ENCODE measurements at regions of chr1 and their contacts with region 1.

Region 1: DNA sequence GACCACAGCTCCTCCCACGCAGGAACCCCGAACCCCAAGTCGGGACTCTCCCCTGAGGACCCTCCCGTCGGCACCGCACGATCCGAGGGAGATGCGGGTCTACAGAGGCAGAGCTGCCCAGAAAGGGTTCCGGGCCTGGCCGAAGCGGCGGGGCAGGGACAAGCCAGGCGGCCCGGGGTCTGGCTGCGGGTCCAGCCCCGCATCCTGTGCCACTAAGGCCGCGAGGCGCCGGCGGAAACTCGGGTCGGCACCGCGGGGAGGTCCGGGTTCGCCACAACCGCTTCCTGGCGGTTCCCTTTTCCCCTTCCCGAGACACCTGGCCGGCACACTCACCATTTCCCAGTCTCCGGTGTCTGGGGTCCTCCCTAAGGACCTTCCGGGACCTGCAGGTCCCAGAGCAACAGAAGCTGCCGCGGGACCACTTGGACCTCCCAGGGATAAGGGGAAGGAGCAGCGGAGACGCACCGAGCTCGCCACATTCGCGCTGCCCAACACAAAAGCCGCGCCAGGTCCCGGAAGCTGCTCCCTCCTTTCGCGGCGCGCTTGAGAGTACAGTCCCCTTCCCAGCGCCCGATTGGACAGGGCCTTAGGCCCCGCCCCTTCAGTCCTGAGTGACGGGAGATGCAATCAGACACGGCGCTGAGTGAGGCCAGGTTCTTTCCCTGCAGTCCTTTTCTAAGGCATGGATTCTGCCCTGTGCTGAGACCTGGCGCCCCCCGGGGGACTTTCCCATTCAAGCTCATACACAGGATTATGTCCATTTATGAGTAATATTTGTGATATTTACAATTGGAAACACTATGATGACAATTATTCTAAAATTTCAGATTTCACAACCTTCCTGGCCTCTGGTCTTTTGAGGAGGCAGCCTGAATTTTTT is at the start of gene ZNF670:
- DNase-seq: peak; percentile 73 to 90
- ATAC-seq: peak; percentile 94 to 97 (median 97)
- H3K4me3 ChIP-seq: peak within 1 kb of the TSS; percentile 82
- H3K4me3 Mint-ChIP-seq: peak within 1 kb of the TSS; percentile 91
- H3K27ac ChIP-seq: peak within 1 kb of the TSS; percentile 22
- H3K27ac Mint-ChIP-seq: peak within 1 kb of the TSS; percentile 68 to 80
- H3K4me1 ChIP-seq: peaks cover 19% of the 10 kb centered on the region
- H3K4me1 Mint-ChIP-seq: peaks cover 33 to 38% of the 10 kb centered on the region in 2 donors
- H3K27me3 ChIP-seq: no peaks in the 10 kb centered on the region
- H3K27me3 Mint-ChIP-seq: peaks cover 4 to 8% of the 10 kb centered on the region in 2 donors
- CTCF ChIP-seq: peak; percentile 40
- total RNA-seq, gene ZNF670: 0.35 to 0.95 (median 0.45) TPM

Region 2: GRCh38 chr1:246931549-246932365 is 146.7 kb before region 1 on chr1 and contains the start of gene AHCTF1:
- intact Hi-C with region 1: loop called (anchors 5 kb)
- DNase-seq: peak; percentile 85 to 98
- ATAC-seq: peak; percentile 85 to 96 (median 88)
- H3K4me3 ChIP-seq: peak within 1 kb of the TSS; percentile 85
- H3K4me3 Mint-ChIP-seq: peak within 1 kb of the TSS; percentile 96
- H3K27ac ChIP-seq: peak within 1 kb of the TSS; percentile 88
- H3K27ac Mint-ChIP-seq: peak within 1 kb of the TSS; percentile 91 to 94
- H3K4me1 ChIP-seq: peaks cover 15% of the 10 kb centered on the region
- H3K4me1 Mint-ChIP-seq: peaks cover 33 to 35% of the 10 kb centered on the region in 2 donors
- H3K27me3 ChIP-seq: no peaks in the 10 kb centered on the region
- H3K27me3 Mint-ChIP-seq: no peaks in the 10 kb centered on the region
- CTCF ChIP-seq: no peak
- total RNA-seq, gene AHCTF1: 46.5 to 50.2 (median 47.4) TPM

Region 3: GRCh38 chr1:247103859-247104591 is 25.5 kb after region 1 on chr1 and contains the start of gene ZNF669:
- intact Hi-C with region 1: loop called (anchors 2 kb)
- DNase-seq: peak; percentile 91 to 93
- ATAC-seq: peak; percentile 98 to 100 (median 99)
- H3K4me3 ChIP-seq: peak within 1 kb of the TSS; percentile 85
- H3K4me3 Mint-ChIP-seq: peak within 1 kb of the TSS; percentile 87
- H3K27ac ChIP-seq: peak within 1 kb of the TSS; percentile 75
- H3K27ac Mint-ChIP-seq: peak within 1 kb of the TSS; percentile 80 to 88
- H3K4me1 ChIP-seq: peaks cover 19% of the 10 kb centered on the region
- H3K4me1 Mint-ChIP-seq: peaks cover 17 to 18% of the 10 kb centered on the region in 2 donors
- H3K27me3 ChIP-seq: peaks cover 4% of the 10 kb centered on the region
- H3K27me3 Mint-ChIP-seq: peaks cover 23 to 27% of the 10 kb centered on the region in 2 donors
- CTCF ChIP-seq: no peak
- total RNA-seq, gene ZNF669: 16.2 to 18.3 (median 17.0) TPM

Measured in natural killer cell (primary cell).